A673 (cell line): ENCODE measurements at regions of chr16 and their contacts with region 1.

Region 1: GRCh38 chr16:81397879-81398520 is 46.6 kb upstream of the CMIP start:
- DNase-seq: no peak
- H3K4me3 ChIP-seq: no peak overlapping the region
- H3K27ac ChIP-seq: no peak overlapping the region
- H3K4me1 ChIP-seq: no peaks in the 10 kb centered on the region
- H3K27me3 ChIP-seq: no peaks in the 10 kb centered on the region
- CTCF ChIP-seq: no peak

Region 2: GRCh38 chr16:79751471-79752184 is 1646.4 kb before region 1 on chr16:
- CTCF ChIA-PET with region 1: no interaction called
- POLR2A ChIA-PET with region 1: no interaction called
- intact Hi-C with region 1: no loop called
- DNase-seq: no peak
- H3K4me3 ChIP-seq: no peak overlapping the region
- H3K27ac ChIP-seq: no peak overlapping the region
- H3K4me1 ChIP-seq: no peaks in the 10 kb centered on the region
- H3K27me3 ChIP-seq: no peaks in the 10 kb centered on the region
- CTCF ChIP-seq: no peak

Region 3: DNA sequence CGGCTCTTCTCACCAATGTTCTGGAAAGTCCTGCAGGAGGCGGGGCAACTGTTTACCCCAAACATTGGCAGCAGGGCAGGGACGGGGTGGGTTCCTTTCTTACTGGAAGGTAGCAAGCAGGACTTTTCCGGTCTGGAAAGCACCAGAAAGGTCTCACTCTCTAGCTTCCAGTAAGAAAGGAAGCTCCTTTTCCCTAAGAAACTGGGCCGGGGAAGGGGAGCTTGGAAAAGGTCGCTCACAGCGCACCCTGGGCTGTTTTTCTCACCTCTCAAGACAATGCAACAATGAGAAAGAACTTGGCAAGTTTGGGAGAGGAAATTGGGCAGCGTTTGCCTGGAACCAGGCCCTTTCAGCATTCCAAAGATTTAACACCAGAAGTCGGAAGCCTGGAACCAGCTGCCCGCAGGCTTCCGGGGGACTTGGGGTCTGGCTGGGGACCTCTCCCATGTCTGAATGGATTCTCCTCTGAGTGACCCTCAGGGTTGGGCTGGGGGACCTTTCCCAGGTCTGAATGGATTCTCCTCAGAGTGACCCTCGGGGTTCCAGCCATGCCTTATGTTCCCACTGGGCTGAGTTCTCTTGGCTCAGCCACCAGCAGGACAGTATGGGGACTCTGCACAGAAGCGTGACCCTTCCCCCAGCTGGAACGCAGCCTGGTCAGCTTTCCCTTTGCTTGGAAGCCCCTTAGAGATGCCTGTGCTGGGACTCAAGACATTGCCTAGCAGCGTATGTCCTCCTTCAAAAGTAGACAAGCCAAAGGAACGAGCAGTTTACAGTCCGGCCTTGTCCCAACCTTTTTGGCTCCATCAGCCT is 214.6 kb after region 1 on chr16:
- CTCF ChIA-PET with region 1: no interaction called
- POLR2A ChIA-PET with region 1: no interaction called
- intact Hi-C with region 1: loop called (anchors 2 kb)
- DNase-seq: no peak
- H3K4me3 ChIP-seq: no peak overlapping the region
- H3K27ac ChIP-seq: no peak overlapping the region
- H3K4me1 ChIP-seq: peaks cover 10% of the 10 kb centered on the region
- H3K27me3 ChIP-seq: no peaks in the 10 kb centered on the region
- CTCF ChIP-seq: no peak

Region 4: GRCh38 chr16:82181456-82182185 is 783.6 kb after region 1 on chr16:
- CTCF ChIA-PET with region 1: no interaction called
- POLR2A ChIA-PET with region 1: no interaction called
- intact Hi-C with region 1: no loop called
- DNase-seq: peak; percentile 42
- H3K4me3 ChIP-seq: no peak overlapping the region
- H3K27ac ChIP-seq: no peak overlapping the region
- H3K4me1 ChIP-seq: no peaks in the 10 kb centered on the region
- H3K27me3 ChIP-seq: no peaks in the 10 kb centered on the region
- CTCF ChIP-seq: no peak